Panc1 (cell line): ENCODE measurements at regions of chr2 and their contacts with region 1.

Region 1: DNA sequence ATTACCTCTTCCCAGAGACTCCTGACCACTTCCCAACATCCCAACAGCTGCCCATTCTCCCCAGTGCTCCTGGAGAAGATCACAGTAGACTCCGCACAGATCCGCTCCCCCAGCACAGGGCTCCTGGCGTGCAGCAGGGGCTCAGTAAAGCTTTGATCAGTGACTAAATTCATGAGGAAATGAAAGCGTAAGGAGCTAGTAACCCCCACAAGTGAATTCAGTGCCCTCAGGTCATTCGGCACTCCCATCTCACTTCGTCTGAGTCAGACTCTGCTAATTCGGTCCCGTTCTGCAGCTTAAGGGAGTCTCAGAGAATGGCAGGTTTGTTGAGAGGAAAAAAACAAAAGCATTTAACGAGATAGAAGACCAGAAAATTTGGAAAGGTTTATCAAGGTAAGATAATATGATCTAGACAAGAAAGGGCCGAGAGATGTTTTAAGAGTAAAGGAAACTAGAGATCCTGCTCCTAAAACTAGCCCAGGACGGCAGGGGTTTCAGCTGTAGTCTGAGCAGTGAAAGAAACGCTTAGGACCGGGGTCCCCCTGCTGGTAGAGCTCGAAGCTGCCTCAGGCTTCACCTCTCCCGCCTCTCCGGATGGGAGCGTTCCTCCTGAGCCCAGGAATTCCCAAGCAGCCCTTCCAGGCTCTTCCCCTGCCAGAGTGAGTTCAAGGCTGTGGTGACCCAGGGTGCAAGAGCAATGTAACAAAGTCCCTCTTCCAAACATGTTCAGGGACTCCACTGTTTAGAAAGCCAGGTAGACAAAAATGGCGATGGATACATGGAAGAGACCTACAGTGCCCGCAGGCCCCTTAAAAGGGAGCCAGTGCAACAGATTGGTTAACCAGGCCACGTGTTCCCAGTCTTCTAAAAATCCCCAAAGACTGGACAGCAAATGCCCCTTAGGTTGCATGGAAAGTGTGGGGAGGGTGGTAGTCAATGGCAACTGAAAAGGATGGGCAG is 127.3 kb downstream of the DNER start:
- DNase-seq: peak; percentile 58
- ATAC-seq: peak; percentile 99
- H3K4me3 ChIP-seq: peak overlapping the region in 1 of 2 experiments; percentile 23; a peak in 2 of 4 replicates
- H3K27ac ChIP-seq: no peak overlapping the region
- H3K4me1 ChIP-seq: no peaks in the 10 kb centered on the region
- H3K27me3 ChIP-seq: no peaks in the 10 kb centered on the region; the same call in 1 of the 2 replicates
- CTCF ChIP-seq: peak; percentile 92

Region 2: GRCh38 chr2:229133155-229133772 is 453.8 kb before region 1 on chr2:
- CTCF ChIA-PET with region 1: no interaction called
- POLR2A ChIA-PET with region 1: no interaction called
- in situ Hi-C with region 1: no loop called
- intact Hi-C with region 1: loop called (anchors 5 kb)
- DNase-seq: peak; percentile 39
- ATAC-seq: peak; percentile 77; the same call in 1 of the 2 replicates
- H3K4me3 ChIP-seq: no peak overlapping the region
- H3K27ac ChIP-seq: no peak overlapping the region
- H3K4me1 ChIP-seq: peaks cover 5% of the 10 kb centered on the region; the same call in 1 of the 2 replicates
- H3K27me3 ChIP-seq: no peaks in the 10 kb centered on the region; the same call in 1 of the 2 replicates
- CTCF ChIP-seq: peak; percentile 67; the same call in 1 of the 2 replicates

Region 3: DNA sequence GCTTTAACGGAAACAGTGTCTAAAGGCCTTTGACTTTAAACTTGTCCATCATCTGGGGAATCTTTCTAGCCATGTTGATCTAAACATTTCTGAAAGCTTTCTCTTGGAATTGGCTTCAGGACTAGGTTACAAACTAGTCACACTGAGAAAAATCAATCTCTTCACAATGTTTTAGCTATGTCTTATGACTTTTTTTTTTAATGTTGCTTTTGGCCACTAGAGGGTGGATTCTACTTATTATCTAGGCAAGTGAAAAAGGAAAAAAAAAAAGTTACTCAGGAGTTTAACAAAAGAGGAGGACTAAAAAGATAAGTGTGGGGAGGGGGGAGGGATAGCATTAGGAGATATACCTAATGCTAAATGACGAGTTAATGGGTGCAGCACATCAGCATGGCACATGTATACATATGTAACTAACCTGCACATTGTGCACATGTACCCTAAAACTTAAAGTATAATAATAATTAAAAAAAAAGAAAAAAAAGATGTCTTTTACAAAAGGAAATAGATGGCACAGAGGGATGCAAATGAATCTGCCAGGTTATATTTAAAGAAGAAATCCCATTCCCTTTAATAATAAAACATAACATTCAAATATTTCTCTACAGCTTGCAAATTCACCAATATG is 155.6 kb before region 1 on chr2:
- CTCF ChIA-PET with region 1: interaction called, 15 read pairs
- POLR2A ChIA-PET with region 1: interaction called, 4 read pairs
- in situ Hi-C with region 1: no loop called
- intact Hi-C with region 1: loop called (anchors 1 kb)
- DNase-seq: no peak
- ATAC-seq: no peak
- H3K4me3 ChIP-seq: no peak overlapping the region
- H3K27ac ChIP-seq: no peak overlapping the region
- H3K4me1 ChIP-seq: no peaks in the 10 kb centered on the region
- H3K27me3 ChIP-seq: no peaks in the 10 kb centered on the region
- CTCF ChIP-seq: peak; percentile 64; the same call in 1 of the 2 replicates

Region 4: DNA sequence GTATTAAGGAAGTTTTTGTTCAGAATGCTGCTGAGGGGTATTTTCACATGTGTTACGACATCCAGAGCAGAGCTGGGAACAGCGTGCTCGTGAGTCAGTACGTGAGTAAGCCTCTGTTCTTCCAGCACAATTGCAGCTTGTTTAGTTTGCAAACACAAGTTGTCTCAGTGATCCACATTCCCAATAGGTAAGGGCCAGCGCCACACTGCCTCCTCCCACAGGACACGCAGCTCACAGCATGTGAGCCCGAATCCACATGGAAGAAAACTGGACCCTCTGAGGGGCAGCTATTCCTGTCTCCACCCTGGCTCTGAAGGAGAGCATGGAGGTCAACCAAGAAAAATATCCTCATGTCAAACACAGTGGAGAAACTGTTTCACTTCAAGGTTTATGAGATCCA is 142.0 kb before region 1 on chr2:
- CTCF ChIA-PET with region 1: interaction called, 6 read pairs
- POLR2A ChIA-PET with region 1: no interaction called
- in situ Hi-C with region 1: no loop called
- intact Hi-C with region 1: loop called (anchors 5 kb)
- DNase-seq: peak; percentile 94
- ATAC-seq: peak; percentile 98
- H3K4me3 ChIP-seq: peak overlapping the region in 1 of 2 experiments; percentile 28; a peak in 2 of 4 replicates
- H3K27ac ChIP-seq: peak overlapping the region; percentile 78
- H3K4me1 ChIP-seq: peaks cover 15% of the 10 kb centered on the region
- H3K27me3 ChIP-seq: no peaks in the 10 kb centered on the region
- CTCF ChIP-seq: peak; percentile 24; the same call in 1 of the 2 replicates

Region 5: GRCh38 chr2:229454934-229455631 is 131.9 kb before region 1 on chr2:
- CTCF ChIA-PET with region 1: no interaction called
- POLR2A ChIA-PET with region 1: interaction called, 14 read pairs
- in situ Hi-C with region 1: no loop called
- intact Hi-C with region 1: no loop called
- DNase-seq: no peak
- ATAC-seq: no peak
- H3K4me3 ChIP-seq: no peak overlapping the region
- H3K27ac ChIP-seq: no peak overlapping the region
- H3K4me1 ChIP-seq: no peaks in the 10 kb centered on the region
- H3K27me3 ChIP-seq: no peaks in the 10 kb centered on the region
- CTCF ChIP-seq: no peak

Region 6: DNA sequence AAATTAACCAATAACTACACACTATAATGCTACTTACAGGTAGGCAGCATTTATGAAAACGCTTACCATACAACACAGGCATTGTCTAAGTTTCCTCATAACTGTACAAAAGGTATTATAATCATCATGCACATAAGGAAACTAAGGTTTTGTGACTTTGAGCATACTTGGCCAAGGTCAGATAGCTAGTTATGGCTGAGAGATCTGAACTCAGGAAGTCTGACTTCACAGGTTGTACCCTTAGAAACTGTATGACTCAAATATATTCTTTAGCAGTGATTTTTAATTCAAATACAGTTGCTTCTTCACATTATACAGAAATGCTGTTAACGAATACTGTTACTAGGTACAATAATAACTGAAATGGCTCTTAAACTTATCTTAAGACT is 245.5 kb after region 1 on chr2:
- CTCF ChIA-PET with region 1: no interaction called
- POLR2A ChIA-PET with region 1: no interaction called
- in situ Hi-C with region 1: no loop called
- intact Hi-C with region 1: no loop called
- DNase-seq: no peak
- ATAC-seq: no peak
- H3K4me3 ChIP-seq: no peak overlapping the region
- H3K27ac ChIP-seq: no peak overlapping the region
- H3K4me1 ChIP-seq: no peaks in the 10 kb centered on the region
- H3K27me3 ChIP-seq: no peaks in the 10 kb centered on the region
- CTCF ChIP-seq: no peak